ENCODE measurements at regions of chr7 and their contacts with region 1.

Region 1: DNA sequence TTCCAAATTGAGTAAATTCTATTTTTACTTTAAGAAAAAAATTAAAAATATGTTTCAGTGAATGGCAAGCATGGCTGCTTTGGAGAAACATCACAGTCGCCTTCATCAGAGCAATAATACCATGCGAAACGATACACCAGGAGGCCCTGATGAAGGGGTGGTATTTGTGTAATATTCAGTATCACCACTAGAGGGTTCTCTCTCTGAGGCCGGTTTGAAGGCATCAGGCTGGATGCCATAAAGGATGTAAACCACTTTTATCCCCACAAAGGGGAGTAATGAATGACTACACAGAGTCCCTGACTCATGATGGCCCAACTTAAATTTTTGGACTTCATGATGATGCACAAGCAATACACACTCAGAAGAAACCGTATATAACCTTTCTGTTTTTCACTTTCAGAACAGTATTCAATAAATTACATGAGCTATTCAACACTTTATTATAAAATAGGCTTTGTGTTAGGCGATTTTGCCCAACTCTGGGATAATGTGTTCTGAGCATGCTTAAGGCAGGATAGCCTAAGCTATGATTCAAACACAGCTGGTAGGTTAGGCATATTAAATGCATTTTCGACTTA is 95.5 kb downstream of the PPP1R17 start:
- DNase-seq: no peak
- ATAC-seq: peak; percentile 51 to 69 (median 64)
- H3K4me3 ChIP-seq: no peak overlapping the region
- H3K27ac ChIP-seq: no peak overlapping the region
- H3K4me1 ChIP-seq: peaks cover 0 to 17% (median 3%) of the 10 kb centered on the region in 9 donors
- H3K27me3 ChIP-seq: no peaks in the 10 kb centered on the region
- CTCF ChIP-seq: peak; percentile 59 to 84 (median 77)

Region 2: DNA sequence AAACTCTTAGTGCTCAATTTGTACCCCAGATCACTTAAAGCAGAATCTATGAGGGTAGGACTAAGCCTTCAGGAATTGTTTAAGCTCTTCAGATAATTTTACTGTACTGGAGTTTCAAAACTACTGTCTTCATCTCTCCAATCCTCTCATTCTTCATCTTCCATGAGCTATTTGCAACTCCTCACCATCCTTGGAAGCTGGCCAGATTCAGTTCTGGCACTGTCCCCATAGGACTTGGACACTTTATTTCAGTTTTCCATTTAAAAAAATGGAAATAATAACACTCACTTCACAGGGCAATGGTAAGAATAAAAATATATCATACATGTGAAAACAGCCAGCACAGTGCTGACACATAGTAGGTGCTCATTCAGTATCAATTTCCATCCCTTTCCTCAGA is 20.9 kb before region 1 on chr7:
- intact Hi-C with region 1: no loop called
- DNase-seq: peak; percentile 30 to 36
- ATAC-seq: no peak
- H3K4me3 ChIP-seq: no peak overlapping the region
- H3K27ac ChIP-seq: no peak overlapping the region
- H3K4me1 ChIP-seq: peaks cover 0 to 3% (median 0%) of the 10 kb centered on the region in 9 donors
- H3K27me3 ChIP-seq: no peaks in the 10 kb centered on the region
- CTCF ChIP-seq: no peak

Region 3: GRCh38 chr7:32036557-32036956 is 254.1 kb after region 1 on chr7:
- intact Hi-C with region 1: loop called in 1 of 10 experiments (anchors 10 kb)
- DNase-seq: no peak
- ATAC-seq: no peak
- H3K4me3 ChIP-seq: no peak overlapping the region
- H3K27ac ChIP-seq: no peak overlapping the region
- H3K4me1 ChIP-seq: peaks cover 0 to 82% (median 43%) of the 10 kb centered on the region in 9 donors
- H3K27me3 ChIP-seq: no peaks in the 10 kb centered on the region
- CTCF ChIP-seq: no peak

Region 4: GRCh38 chr7:32164346-32164957 is 382.0 kb after region 1 on chr7:
- intact Hi-C with region 1: loop called in 1 of 10 experiments (anchors 10 kb)
- DNase-seq: peak in 1 of 2 donors; percentile 50
- ATAC-seq: peak; percentile 36 to 80 (median 76)
- H3K4me3 ChIP-seq: no peak overlapping the region
- H3K27ac ChIP-seq: peak overlapping the region in 7 of 10 donors; percentile 51 to 88 (median 75)
- H3K4me1 ChIP-seq: peaks cover 9 to 37% (median 27%) of the 10 kb centered on the region in 9 donors
- H3K27me3 ChIP-seq: no peaks in the 10 kb centered on the region
- CTCF ChIP-seq: peak; percentile 22 to 65 (median 50)

Measured in heart right ventricle (tissue), 16 donors.